Naive thymus-derived CD4-positive, alpha-beta T cell (primary cell): ENCODE measurements at regions of chr9 and their contacts with region 1.

Region 1: DNA sequence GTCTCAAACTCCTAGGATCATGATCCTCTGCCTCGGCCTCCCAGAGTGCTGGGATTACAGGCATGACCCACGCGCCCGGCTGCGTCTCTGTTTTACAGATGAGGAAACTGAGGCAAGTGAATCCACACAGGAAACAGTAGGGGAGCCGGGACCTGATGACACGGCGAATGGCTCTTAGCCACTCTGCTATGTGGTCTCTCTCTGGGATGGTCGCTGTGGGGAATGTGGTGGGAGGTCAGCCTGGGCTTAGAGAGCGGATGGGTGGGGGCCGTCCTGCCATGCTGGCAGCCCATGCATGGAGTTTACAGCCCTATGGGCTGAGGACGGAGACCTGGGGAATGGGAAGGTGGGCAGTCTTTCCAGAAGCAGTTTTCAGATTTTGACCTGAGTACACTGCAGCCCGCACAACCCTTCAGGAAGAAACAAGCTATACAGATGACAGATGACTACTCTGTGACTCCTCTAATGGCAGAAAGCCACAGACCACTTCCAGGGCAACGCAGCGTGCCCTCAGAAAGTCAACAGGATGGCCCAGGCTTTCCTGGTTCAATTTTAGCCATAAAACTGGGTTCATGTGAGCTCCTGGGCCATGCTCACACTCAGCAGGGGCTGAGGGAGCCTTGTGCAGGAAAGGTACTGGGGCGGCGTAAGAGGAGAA is 136.1 kb upstream of the RAPGEF1 start:
- DNase-seq: no peak
- ATAC-seq: no peak
- H3K4me3 ChIP-seq: no peak overlapping the region
- H3K4me3 Mint-ChIP-seq: peak overlapping the region in 1 of 10 donors; percentile 31
- H3K27ac ChIP-seq: no peak overlapping the region
- H3K27ac Mint-ChIP-seq: peak overlapping the region in 1 of 9 donors; percentile 79
- H3K4me1 ChIP-seq: no peaks in the 10 kb centered on the region
- H3K4me1 Mint-ChIP-seq: peaks cover 0 to 32% (median 2%) of the 10 kb centered on the region in 7 donors
- H3K27me3 ChIP-seq: no peaks in the 10 kb centered on the region
- H3K27me3 Mint-ChIP-seq: no peaks in the 10 kb centered on the region

Region 2: GRCh38 chr9:131635285-131635684 is 240.7 kb before region 1 on chr9:
- CTCF ChIA-PET with region 1: no interaction called
- POLR2A ChIA-PET with region 1: no interaction called
- intact Hi-C with region 1: no loop called
- DNase-seq: peak; percentile 34 to 76 (median 60)
- ATAC-seq: peak; percentile 98
- H3K4me3 ChIP-seq: no peak overlapping the region
- H3K4me3 Mint-ChIP-seq: peak overlapping the region in 3 of 10 donors; percentile 5 to 50 (median 11)
- H3K27ac ChIP-seq: peak overlapping the region; percentile 36
- H3K27ac Mint-ChIP-seq: peak overlapping the region; percentile 70 to 89 (median 85)
- H3K4me1 ChIP-seq: peaks cover 12 to 20% of the 10 kb centered on the region in 2 donors
- H3K4me1 Mint-ChIP-seq: peaks cover 15 to 51% (median 19%) of the 10 kb centered on the region in 7 donors
- H3K27me3 ChIP-seq: no peaks in the 10 kb centered on the region
- H3K27me3 Mint-ChIP-seq: no peaks in the 10 kb centered on the region

Region 3: DNA sequence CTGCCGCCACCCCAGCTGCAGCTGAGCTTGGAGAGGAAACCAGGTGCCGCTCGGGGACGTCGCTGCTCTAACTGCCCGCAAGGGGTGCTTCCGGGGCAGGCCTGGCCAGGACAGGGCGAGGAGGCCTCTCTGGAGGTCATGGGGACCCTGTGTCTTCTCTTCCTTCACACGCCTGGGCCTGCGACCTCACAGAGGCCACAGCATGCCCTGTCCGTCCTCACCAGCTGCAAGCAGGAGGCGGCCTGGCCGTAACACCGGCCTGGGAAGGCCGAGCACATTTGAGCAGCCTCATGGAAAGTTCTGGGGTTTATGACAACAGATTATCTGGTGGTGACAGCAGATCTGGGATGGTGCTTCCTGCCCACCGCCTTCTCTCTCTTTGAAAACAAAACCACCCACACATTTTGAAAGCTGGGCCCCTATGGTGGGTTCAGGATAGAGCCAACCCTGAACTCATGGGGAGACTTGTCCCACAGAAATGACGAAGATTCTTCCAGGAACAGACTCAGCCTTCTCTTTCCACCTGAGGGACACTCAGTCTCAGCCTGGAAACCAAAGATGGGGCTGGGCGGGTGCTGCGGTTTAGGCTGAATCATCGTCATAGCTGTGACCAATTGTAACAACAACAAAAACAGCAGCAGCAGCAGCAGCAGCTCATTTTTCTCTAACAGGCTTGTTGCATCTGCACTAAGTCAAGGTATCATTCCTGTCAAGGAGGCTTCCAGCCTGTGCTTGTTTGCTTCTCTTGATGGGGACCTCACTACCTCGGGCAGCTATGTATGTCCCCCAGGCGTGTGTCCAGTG is 36.5 kb before region 1 on chr9:
- CTCF ChIA-PET with region 1: no interaction called
- POLR2A ChIA-PET with region 1: no interaction called
- intact Hi-C with region 1: loop called in 1 of 2 experiments (anchors 5 kb)
- DNase-seq: peak in 3 of 9 donors; percentile 9 to 76 (median 15)
- ATAC-seq: peak; percentile 54
- H3K4me3 ChIP-seq: no peak overlapping the region
- H3K4me3 Mint-ChIP-seq: peak overlapping the region in 3 of 10 donors; percentile 12 to 76 (median 51)
- H3K27ac ChIP-seq: no peak overlapping the region
- H3K27ac Mint-ChIP-seq: peak overlapping the region in 3 of 9 donors; percentile 56 to 98 (median 84)
- H3K4me1 ChIP-seq: peaks cover 0 to 3% of the 10 kb centered on the region in 2 donors
- H3K4me1 Mint-ChIP-seq: peaks cover 0 to 31% (median 3%) of the 10 kb centered on the region in 7 donors
- H3K27me3 ChIP-seq: no peaks in the 10 kb centered on the region
- H3K27me3 Mint-ChIP-seq: peaks cover 3 to 23% (median 6%) of the 10 kb centered on the region in 5 donors

Region 4: GRCh38 chr9:131915181-131915580 is 39.2 kb after region 1 on chr9:
- CTCF ChIA-PET with region 1: no interaction called
- POLR2A ChIA-PET with region 1: no interaction called
- intact Hi-C with region 1: no loop called
- DNase-seq: no peak
- ATAC-seq: no peak
- H3K4me3 ChIP-seq: no peak overlapping the region
- H3K4me3 Mint-ChIP-seq: no peak overlapping the region
- H3K27ac ChIP-seq: no peak overlapping the region
- H3K27ac Mint-ChIP-seq: no peak overlapping the region
- H3K4me1 ChIP-seq: no peaks in the 10 kb centered on the region
- H3K4me1 Mint-ChIP-seq: peaks cover 0 to 11% (median 0%) of the 10 kb centered on the region in 7 donors
- H3K27me3 ChIP-seq: no peaks in the 10 kb centered on the region
- H3K27me3 Mint-ChIP-seq: no peaks in the 10 kb centered on the region

Region 5: DNA sequence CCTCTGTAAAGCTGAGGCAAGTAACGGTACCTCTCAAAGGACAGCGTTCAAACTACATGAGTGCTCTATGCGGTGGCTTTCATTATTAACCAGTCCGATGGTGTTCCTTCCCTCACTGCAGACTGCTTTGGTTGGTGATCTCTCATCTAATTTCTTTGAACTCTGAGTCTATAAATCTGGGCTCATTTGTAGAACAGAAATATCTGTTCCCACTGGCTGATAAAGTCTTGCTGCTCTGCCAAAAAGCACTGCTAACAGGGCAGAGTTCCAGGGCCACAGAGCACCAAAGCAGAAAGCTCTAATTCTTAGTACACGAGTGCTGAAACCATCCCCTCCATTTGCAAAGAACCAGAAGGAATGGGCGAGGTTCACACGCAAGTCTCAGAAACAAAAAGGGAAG is 121.8 kb after region 1 on chr9:
- CTCF ChIA-PET with region 1: no interaction called
- POLR2A ChIA-PET with region 1: no interaction called
- intact Hi-C with region 1: no loop called
- DNase-seq: no peak
- ATAC-seq: no peak
- H3K4me3 ChIP-seq: no peak overlapping the region
- H3K4me3 Mint-ChIP-seq: no peak overlapping the region
- H3K27ac ChIP-seq: no peak overlapping the region
- H3K27ac Mint-ChIP-seq: no peak overlapping the region
- H3K4me1 ChIP-seq: no peaks in the 10 kb centered on the region
- H3K4me1 Mint-ChIP-seq: peaks cover 6 to 27% (median 11%) of the 10 kb centered on the region in 7 donors
- H3K27me3 ChIP-seq: no peaks in the 10 kb centered on the region
- H3K27me3 Mint-ChIP-seq: no peaks in the 10 kb centered on the region